Left colon (tissue), 2 donors: ENCODE measurements at regions of chr1 and their contacts with region 1.

Region 1: DNA sequence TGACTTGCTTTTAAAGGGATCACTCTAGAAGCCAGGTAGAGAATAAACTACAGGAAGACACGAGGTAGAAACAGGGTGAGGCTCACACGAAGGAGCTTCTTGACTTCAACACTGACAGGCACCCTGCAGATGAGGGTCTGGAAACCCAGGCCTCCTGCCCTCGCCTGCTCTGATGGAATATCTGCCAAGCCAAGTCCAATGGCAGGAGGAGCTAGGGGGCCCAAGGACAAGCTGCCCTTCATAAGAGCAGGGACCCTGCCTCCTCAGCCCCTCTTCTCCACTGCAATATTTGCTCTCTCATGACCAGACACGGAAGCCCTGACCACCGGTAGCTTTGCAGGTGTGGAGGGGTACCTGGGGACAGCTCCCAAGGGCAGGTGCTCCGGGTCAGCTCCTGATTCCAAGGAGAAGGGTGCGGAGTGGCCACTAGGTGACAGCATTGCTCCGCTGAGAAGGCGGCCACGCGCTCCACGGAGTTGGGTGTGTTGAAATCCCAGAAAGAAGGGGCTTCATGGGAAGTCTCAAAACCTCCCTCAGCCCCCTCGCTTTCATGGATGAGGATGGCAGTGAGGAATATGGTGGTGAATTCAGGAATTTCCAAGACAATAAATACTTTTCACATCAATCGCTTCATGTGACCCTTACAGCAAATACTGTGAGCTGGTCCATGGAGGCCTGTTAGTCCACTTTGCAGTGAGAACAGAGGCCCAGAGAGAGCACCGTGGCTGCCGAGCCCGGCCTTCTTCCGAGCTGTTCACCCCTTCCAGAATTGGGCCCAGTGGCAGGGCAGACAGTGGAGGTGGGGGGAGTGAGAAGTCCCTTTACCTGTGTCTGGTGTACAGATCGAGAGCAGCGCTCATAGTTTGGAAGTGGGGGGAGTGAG is 33.2 kb upstream of the PAX7 start:
- DNase-seq: peak; percentile 30 to 61
- ATAC-seq: peak; percentile 82

Region 2: DNA sequence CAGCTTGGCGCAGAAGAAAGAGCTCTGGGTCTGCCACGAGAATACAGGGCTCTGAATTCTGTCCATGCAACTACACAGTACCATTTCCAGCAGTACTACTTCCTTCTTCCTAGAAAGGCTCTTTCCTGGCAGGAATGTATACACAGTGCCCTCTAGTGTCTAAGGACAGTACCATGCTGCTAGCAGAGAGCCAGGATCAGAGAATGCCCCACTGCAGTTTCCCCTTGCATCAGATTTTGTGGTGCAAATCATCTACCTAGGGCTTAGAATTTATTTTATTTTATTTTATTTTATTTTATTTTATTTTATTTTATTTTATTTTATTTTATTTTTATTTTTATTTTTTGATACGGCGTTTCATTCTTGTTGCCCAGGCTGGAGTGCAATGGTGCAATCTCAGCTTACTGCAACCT is 84.0 kb after region 1 on chr1:
- intact Hi-C with region 1: no loop called
- DNase-seq: no peak
- ATAC-seq: peak; percentile 88

Region 3: DNA sequence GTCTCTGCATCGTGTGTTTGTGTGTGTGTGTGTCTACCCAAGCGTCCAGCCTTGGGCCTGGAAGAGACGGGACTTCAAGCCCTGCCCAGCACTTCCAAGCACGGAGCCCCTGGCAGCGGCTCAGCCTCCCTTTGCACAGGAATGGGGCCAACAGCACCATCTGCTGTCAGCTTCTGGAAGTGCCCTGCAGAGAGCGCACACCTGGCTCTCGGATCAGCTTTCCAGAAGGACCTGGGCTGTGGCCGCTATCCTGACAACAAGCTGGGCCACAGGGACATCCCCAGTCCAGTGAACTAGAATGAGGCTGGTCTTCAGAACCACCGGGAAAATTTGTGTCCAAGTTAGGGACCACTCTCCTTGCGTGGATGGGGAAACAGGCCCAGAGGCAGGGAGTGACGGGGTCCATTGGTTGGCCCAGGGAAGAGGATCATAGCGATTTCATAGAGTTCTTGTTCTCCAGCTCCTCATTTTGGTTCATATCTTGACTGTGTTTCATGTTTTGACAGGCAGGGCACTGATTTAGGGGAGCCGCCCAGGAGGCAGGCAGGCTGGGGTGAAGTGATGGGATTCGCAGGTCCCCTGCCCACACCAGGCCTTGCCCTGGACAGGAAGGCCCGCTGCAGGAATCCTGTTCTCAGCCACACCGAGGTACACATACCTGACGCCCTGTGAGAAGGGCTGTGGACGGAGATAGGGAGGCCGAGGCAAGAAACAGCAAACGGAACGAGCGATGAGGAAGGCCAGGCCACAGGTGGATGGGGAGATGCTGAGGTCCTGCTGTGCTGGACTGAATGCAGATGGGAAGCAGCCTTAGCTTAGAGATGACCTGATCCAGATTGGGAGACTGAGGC is 223.6 kb after region 1 on chr1:
- intact Hi-C with region 1: loop called (anchors 5 to 10 kb)
- DNase-seq: peak; percentile 34 to 78
- ATAC-seq: peak; percentile 82

Region 4: DNA sequence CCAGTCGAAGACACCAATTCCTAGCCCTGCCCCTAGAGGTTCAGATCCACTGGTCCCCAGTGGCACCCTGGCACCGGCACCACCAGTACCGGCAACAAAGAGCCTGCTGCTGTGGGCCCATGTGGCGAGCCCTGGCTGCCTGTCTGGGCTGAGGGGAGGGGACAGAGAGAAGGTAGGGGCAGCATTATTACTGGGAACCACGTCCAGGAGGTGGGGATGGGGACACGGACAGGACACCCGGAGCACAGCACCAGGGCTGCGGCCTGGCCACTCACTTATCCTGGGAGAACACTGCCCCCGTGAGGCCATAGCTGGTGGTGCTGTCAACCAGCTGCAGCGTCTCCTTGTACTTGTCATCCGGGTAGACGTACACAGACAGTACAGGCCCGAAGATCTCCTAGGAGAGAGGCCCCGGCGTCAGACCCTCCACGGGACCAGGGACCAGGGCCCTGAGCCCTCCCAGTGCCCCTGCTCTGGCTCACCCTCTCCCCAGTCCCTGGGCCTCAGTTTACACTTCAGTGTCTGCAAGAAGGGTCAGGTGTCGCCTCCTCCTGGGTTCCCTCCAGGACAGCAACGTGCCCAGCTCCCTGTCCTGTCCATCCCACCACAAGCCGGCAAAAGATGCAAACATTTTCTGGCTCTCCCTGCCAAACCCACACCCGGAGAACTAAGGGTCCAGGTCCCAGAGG is 277.9 kb after region 1 on chr1:
- intact Hi-C with region 1: loop called in 1 of 2 experiments (anchors 10 kb)
- DNase-seq: peak; percentile 75 to 87
- ATAC-seq: peak; percentile 83